CD4-positive, alpha-beta T cell (primary cell): ENCODE measurements at regions of chr1 and their contacts with region 1.

Region 1: GRCh38 chr1:21200767-21201166 is 24.1 kb upstream of the EIF4G3 start:
- DNase-seq: no peak
- ATAC-seq: no peak
- H3K4me3 ChIP-seq: no peak overlapping the region
- H3K4me3 Mint-ChIP-seq: no peak overlapping the region
- H3K27ac ChIP-seq: no peak overlapping the region
- H3K27ac Mint-ChIP-seq: no peak overlapping the region
- H3K4me1 ChIP-seq: no peaks in the 10 kb centered on the region
- H3K4me1 Mint-ChIP-seq: no peaks in the 10 kb centered on the region
- H3K27me3 ChIP-seq: no peaks in the 10 kb centered on the region
- H3K27me3 Mint-ChIP-seq: peaks cover 5% of the 10 kb centered on the region
- CTCF ChIP-seq: no peak

Region 2: DNA sequence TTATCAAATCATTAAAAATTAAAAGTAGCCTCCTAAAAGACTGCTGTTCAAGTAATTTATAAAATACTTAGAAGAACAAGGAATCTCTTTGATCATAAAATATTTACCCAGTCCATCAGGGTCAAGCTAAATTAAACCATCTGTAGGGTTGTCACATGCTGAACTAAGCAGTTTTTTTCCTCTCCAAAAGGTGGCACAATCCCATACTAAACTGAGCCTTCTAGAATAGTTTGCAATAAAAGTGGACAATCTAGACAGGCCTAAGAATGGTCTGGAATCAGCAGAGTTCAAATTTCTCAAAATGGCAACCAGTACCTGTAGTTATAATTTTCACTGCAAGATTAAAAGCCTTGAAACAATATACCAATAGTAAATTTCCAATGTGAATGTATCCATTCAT is 218.9 kb before region 1 on chr1:
- CTCF ChIA-PET with region 1: no interaction called
- POLR2A ChIA-PET with region 1: no interaction called
- intact Hi-C with region 1: loop called in 1 of 2 experiments (anchors 5 kb)
- DNase-seq: peak in 1 of 14 experiments; percentile 6
- ATAC-seq: no peak
- H3K4me3 ChIP-seq: no peak overlapping the region
- H3K4me3 Mint-ChIP-seq: no peak overlapping the region
- H3K27ac ChIP-seq: no peak overlapping the region
- H3K27ac Mint-ChIP-seq: no peak overlapping the region
- H3K4me1 ChIP-seq: no peaks in the 10 kb centered on the region
- H3K4me1 Mint-ChIP-seq: no peaks in the 10 kb centered on the region
- H3K27me3 ChIP-seq: no peaks in the 10 kb centered on the region
- H3K27me3 Mint-ChIP-seq: no peaks in the 10 kb centered on the region
- CTCF ChIP-seq: no peak

Region 3: DNA sequence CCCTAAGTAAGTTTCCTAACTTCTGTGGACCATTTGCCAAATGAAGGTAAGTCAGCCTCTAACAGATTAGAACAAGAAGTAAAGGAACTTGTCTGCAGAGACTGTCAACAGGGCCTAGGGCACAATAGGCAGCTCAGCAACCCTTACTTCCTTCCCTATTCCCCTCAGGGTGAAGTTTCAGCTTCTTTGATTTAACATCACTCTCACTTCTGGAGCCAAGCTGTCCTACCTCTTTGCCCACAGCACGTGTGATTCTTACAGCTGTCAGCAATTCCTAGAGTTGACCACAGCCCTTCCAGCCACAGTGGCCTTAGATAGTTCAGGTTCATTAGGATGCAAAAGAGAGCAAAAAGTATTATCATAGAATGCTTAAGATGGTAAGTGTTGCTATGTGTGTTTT is 16.5 kb before region 1 on chr1:
- CTCF ChIA-PET with region 1: interaction called, 11 read pairs
- POLR2A ChIA-PET with region 1: no interaction called
- intact Hi-C with region 1: no loop called
- DNase-seq: no peak
- ATAC-seq: no peak
- H3K4me3 ChIP-seq: no peak overlapping the region
- H3K4me3 Mint-ChIP-seq: no peak overlapping the region
- H3K27ac ChIP-seq: no peak overlapping the region
- H3K27ac Mint-ChIP-seq: no peak overlapping the region
- H3K4me1 ChIP-seq: no peaks in the 10 kb centered on the region
- H3K4me1 Mint-ChIP-seq: no peaks in the 10 kb centered on the region
- H3K27me3 ChIP-seq: no peaks in the 10 kb centered on the region
- H3K27me3 Mint-ChIP-seq: no peaks in the 10 kb centered on the region
- CTCF ChIP-seq: no peak

Region 4: GRCh38 chr1:21232044-21232443 is 31.3 kb after region 1 on chr1:
- CTCF ChIA-PET with region 1: no interaction called
- POLR2A ChIA-PET with region 1: no interaction called
- intact Hi-C with region 1: no loop called
- DNase-seq: peak in 8 of 14 experiments; percentile 12 to 74 (median 32)
- ATAC-seq: peak; percentile 58
- H3K4me3 ChIP-seq: no peak overlapping the region
- H3K4me3 Mint-ChIP-seq: no peak overlapping the region
- H3K27ac ChIP-seq: no peak overlapping the region
- H3K27ac Mint-ChIP-seq: no peak overlapping the region
- H3K4me1 ChIP-seq: no peaks in the 10 kb centered on the region
- H3K4me1 Mint-ChIP-seq: no peaks in the 10 kb centered on the region
- H3K27me3 ChIP-seq: no peaks in the 10 kb centered on the region
- H3K27me3 Mint-ChIP-seq: no peaks in the 10 kb centered on the region
- CTCF ChIP-seq: peak; percentile 95

Region 5: DNA sequence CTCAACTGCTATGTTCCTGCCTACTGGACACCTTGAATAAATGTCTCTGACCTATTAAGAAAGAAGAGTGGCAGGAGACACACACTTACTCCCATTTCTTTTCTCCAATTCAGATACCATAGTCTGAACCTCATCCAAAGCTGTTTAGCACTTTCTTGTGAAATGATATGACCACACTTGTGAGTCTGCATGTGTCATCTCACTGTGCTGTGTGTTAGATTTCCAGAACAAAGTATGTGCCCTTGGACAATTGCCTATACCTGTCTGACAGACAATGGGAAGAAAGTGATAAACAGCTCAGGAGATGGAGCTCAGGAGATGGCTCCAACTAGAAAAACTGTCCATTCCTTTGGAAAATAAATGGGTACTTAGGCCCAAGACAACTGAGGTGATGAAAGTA is 533.8 kb after region 1 on chr1:
- CTCF ChIA-PET with region 1: no interaction called
- POLR2A ChIA-PET with region 1: no interaction called
- intact Hi-C with region 1: no loop called
- DNase-seq: no peak
- ATAC-seq: no peak
- H3K4me3 ChIP-seq: no peak overlapping the region
- H3K4me3 Mint-ChIP-seq: no peak overlapping the region
- H3K27ac ChIP-seq: no peak overlapping the region
- H3K27ac Mint-ChIP-seq: no peak overlapping the region
- H3K4me1 ChIP-seq: no peaks in the 10 kb centered on the region
- H3K4me1 Mint-ChIP-seq: no peaks in the 10 kb centered on the region
- H3K27me3 ChIP-seq: no peaks in the 10 kb centered on the region
- H3K27me3 Mint-ChIP-seq: no peaks in the 10 kb centered on the region
- CTCF ChIP-seq: no peak